ENCODE measurements at regions of chr2 and their contacts with region 1.

Region 1: GRCh38 chr2:197442857-197443256 is 8.0 kb upstream of the SF3B1 start:
- DNase-seq: no peak
- ATAC-seq: no peak
- H3K4me3 ChIP-seq: no peak overlapping the region
- H3K27ac ChIP-seq: no peak overlapping the region
- H3K4me1 ChIP-seq: no peaks in the 10 kb centered on the region
- H3K27me3 ChIP-seq: no peaks in the 10 kb centered on the region
- CTCF ChIP-seq: no peak

Region 2: GRCh38 chr2:197453161-197453914 is 10.5 kb after region 1 on chr2 and contains the start of gene COQ10B:
- CTCF ChIA-PET with region 1: no interaction called
- POLR2A ChIA-PET with region 1: interaction called, 13 read pairs
- in situ Hi-C with region 1: no loop called
- intact Hi-C with region 1: no loop called
- DNase-seq: peak; percentile 97
- ATAC-seq: peak; percentile 97
- H3K4me3 ChIP-seq: peak within 1 kb of the TSS; percentile 77 to 85
- H3K27ac ChIP-seq: peak within 1 kb of the TSS; percentile 96
- H3K4me1 ChIP-seq: peaks cover 6% of the 10 kb centered on the region
- H3K27me3 ChIP-seq: no peaks in the 10 kb centered on the region
- CTCF ChIP-seq: no peak
- total RNA-seq, gene COQ10B: 34.7 TPM

Region 3: DNA sequence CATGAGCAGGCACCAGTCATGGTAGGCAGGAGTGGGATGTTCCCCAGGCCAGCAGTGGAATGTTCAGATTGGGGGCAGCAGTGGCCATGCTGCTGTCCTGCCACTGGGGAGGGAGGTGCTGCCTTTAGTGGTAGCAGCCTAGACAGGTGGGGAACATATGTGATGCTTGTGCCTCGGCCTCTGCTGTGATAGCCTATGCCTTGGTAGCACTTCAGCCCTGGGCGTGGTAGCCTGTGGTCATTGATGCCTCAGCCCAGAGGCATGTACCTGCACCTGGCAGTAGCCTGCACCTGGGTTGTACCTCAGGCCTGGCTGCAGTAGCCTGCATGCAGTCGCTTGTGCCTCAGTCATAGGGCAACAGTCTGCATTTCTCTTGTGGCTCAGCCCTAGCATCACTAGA is 225.4 kb after region 1 on chr2:
- CTCF ChIA-PET with region 1: no interaction called
- POLR2A ChIA-PET with region 1: no interaction called
- in situ Hi-C with region 1: no loop called
- intact Hi-C with region 1: no loop called
- DNase-seq: no peak
- ATAC-seq: no peak; the same call in 1 of the 2 replicates
- H3K4me3 ChIP-seq: no peak overlapping the region
- H3K27ac ChIP-seq: no peak overlapping the region
- H3K4me1 ChIP-seq: no peaks in the 10 kb centered on the region
- H3K27me3 ChIP-seq: no peaks in the 10 kb centered on the region
- CTCF ChIP-seq: no peak

Measured in Panc1 (cell line).